Activated CD4-positive, alpha-beta T cell treated with anti-CD3 and anti-CD28 coated beads, Interleukin-2, amount 10 ng/mL, durations not matched to agents 24 days and 14 days (primary cell): ENCODE measurements at regions of chr15 and their contacts with region 1.

Region 1: GRCh38 chr15:76057332-76058000 is 2.3 kb upstream of the TMEM266 start:
- DNase-seq: peak; percentile 82
- H3K4me3 Mint-ChIP-seq: no peak overlapping the region
- H3K27ac Mint-ChIP-seq: no peak overlapping the region
- H3K4me1 Mint-ChIP-seq: peaks cover 11% of the 10 kb centered on the region
- H3K27me3 Mint-ChIP-seq: peaks cover 55% of the 10 kb centered on the region

Region 2: GRCh38 chr15:76139368-76140073 is 82.1 kb after region 1 on chr15:
- intact Hi-C with region 1: loop called (anchors 1 kb)
- DNase-seq: peak; percentile 93
- H3K4me3 Mint-ChIP-seq: no peak overlapping the region
- H3K27ac Mint-ChIP-seq: no peak overlapping the region
- H3K4me1 Mint-ChIP-seq: peaks cover 4% of the 10 kb centered on the region
- H3K27me3 Mint-ChIP-seq: peaks cover 32% of the 10 kb centered on the region

Region 3: GRCh38 chr15:76150971-76151598 is 93.6 kb after region 1 on chr15:
- intact Hi-C with region 1: loop called (anchors 5 kb)
- DNase-seq: peak; percentile 92
- H3K4me3 Mint-ChIP-seq: no peak overlapping the region
- H3K27ac Mint-ChIP-seq: no peak overlapping the region
- H3K4me1 Mint-ChIP-seq: peaks cover 4% of the 10 kb centered on the region
- H3K27me3 Mint-ChIP-seq: peaks cover 17% of the 10 kb centered on the region

Region 4: DNA sequence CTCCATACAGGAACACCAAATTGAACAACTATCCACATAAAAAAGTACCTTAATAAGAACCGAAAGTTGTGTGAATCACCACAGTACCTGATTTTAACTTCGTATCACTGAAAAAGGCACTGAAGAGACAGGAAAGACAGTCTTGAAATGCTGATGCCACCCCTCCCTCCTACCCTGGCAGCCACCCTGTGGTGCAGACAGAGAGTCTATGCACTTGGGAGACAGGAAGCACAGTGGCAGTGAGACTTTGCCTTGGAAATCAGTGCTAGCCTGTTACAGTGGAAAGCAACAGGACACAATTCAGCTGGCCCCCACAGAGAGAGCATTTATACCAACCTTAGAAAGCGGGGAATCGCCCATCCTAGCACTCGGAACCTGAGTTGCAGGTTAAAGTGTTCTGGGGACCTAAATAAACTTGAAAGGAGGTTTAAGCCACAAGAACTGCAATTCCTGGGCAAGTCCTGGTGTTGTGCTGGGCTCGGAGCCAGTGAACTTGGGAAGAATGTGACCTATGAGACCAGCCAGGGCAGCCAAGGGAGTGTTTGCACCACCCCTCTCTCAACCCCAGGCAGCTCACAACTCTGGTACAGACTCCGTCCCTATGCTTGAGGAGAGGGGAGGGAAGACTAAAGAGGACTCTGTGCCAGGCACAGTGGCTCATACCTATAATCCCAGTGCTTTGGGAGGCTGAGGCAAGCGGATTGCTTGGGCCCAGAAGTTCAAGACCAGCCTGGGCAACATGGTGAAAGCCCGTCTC is 519.2 kb after region 1 on chr15:
- intact Hi-C with region 1: no loop called
- DNase-seq: no peak
- H3K4me3 Mint-ChIP-seq: no peak overlapping the region
- H3K27ac Mint-ChIP-seq: no peak overlapping the region
- H3K4me1 Mint-ChIP-seq: peaks cover 21% of the 10 kb centered on the region
- H3K27me3 Mint-ChIP-seq: no peaks in the 10 kb centered on the region